Gastrocnemius medialis (tissue), 4 donors: ENCODE measurements at regions of chr20 and their contacts with region 1.

Region 1: DNA sequence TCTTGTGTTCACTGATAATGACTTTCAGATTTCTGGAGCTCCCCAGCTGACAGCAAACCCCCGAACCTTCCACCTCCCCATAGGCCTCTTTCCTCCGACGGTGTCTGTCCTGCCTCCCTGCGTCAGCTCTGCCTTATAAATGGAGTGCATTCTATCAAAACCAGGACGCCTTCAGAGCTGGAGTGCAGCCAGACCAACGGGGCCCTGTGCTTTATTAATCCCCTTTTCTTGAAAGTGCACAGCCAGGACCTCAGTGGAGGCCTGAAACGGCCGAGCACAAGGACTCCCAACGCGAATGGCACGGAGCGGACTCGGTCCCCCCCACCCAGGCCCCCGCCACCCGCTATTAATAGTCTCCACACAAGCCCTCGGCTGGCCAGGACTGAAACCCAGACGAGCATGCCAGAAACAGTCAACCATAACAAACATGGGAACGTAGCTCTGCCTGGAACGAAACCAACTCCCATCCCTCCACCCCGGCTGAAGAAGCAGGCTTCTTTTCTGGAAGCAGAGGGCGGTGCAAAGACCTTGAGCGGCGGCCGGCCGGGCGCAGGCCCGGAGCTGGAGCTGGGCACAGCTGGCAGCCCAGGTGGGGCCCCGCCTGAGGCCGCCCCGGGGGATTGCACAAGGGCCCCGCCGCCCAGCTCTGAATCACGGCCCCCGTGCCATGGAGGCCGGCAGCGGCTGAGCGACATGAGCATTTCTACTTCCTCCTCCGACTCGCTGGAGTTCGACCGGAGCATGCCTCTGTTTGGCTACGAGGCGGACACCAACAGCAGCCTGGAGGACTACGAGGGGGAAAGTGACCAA is 42.3 kb upstream of the NAA20 start:
- DNase-seq: peak; percentile 82 to 90
- ATAC-seq: peak; percentile 73 to 77
- H3K4me3 ChIP-seq: peak overlapping the region; percentile 54 to 65 (median 61)
- H3K27ac ChIP-seq: peak overlapping the region; percentile 86 to 95 (median 94)
- H3K4me1 ChIP-seq: peaks cover 62 to 63% of the 10 kb centered on the region in 2 donors
- H3K27me3 ChIP-seq: no peaks in the 10 kb centered on the region
- CTCF ChIP-seq: peak in 1 of 5 experiments; percentile 8
- POLR2A ChIP-seq: peak; percentile 19 to 62

Region 2: DNA sequence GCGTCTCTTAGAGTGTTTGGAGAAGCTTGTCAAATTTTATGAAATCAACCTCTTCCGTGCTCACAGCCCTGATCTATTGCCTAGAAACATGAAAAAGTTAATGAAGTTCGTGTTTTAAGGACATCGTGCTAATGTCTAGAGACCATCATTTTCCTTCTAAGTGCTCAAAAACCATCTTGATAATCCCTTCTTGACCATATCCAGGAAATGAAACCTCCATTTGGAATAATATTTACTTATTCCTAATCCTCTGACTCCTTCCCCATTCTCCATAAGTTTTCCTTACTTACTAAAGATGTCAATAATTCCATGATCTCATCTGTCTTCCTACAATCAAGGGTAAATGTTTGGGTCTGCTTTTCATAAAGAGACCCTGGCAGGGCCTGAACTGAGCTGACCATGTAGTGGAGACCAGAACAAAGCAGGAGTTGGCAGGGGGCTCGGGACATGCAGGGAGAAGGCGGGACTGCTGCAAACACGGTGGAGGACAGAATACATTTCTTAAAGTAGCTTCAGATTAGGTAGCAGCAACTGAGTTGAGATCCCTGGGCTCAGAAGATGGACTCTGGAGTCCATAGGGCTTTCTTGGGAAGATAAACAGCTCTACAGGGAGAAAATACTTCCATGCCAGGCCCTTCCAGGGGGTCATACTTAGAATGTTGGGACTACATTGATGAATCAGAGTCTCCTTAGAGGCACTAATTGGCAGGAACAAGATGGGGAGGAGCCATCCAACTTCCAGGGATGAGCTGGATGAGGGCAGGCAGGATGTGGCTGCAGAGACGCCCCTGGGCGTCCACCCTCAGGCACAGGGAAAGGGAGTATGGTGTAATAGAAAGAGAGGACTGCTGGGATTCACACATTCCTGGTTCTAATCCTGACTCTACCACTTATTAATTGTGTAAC is 116.1 kb before region 1 on chr20:
- in situ Hi-C with region 1: no loop called
- intact Hi-C with region 1: no loop called
- DNase-seq: peak in 1 of 2 donors; percentile 18
- ATAC-seq: no peak
- H3K4me3 ChIP-seq: no peak overlapping the region
- H3K27ac ChIP-seq: no peak overlapping the region
- H3K4me1 ChIP-seq: no peaks in the 10 kb centered on the region
- H3K27me3 ChIP-seq: no peaks in the 10 kb centered on the region
- CTCF ChIP-seq: no peak
- POLR2A ChIP-seq: no peak

Region 3: DNA sequence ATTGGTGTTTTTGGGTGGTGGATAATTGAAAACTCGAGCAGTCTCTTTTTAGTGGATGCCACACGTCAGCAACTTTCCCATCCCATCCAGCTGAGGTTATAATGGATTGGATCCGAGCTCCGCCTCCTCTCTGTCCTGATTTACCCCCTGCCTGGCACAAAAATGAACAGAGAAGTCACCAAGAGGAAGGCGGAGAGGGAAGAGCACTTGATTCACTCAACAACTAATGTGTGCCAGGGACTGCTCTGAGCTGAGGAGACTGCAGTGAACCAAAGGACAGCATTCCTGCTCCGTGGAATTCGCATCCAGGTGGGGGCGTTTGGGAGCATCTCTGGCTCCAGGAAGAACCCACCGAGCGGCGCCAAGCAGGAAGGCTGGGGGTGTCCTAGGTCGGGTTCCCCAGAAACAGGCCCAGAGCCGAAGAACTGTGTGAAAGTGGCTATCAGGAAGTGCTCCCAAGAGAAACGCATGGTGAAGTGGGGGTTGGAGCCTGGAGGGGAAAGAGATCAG is 53.5 kb before region 1 on chr20:
- in situ Hi-C with region 1: no loop called
- intact Hi-C with region 1: loop called (anchors 2 kb)
- DNase-seq: peak; percentile 49 to 81
- ATAC-seq: peak; percentile 89 to 90
- H3K4me3 ChIP-seq: peak overlapping the region; percentile 18 to 42 (median 32)
- H3K27ac ChIP-seq: peak overlapping the region; percentile 73 to 87 (median 82)
- H3K4me1 ChIP-seq: peaks cover 56 to 67% of the 10 kb centered on the region in 2 donors
- H3K27me3 ChIP-seq: no peaks in the 10 kb centered on the region
- CTCF ChIP-seq: no peak
- POLR2A ChIP-seq: no peak

Region 4: GRCh38 chr20:19934792-19935491 is 39.9 kb before region 1 on chr20:
- in situ Hi-C with region 1: no loop called
- intact Hi-C with region 1: loop called (anchors 5 kb)
- DNase-seq: peak; percentile 61 to 70
- ATAC-seq: peak; percentile 74 to 82
- H3K4me3 ChIP-seq: peak overlapping the region; percentile 24 to 45 (median 34)
- H3K27ac ChIP-seq: peak overlapping the region; percentile 77 to 83 (median 77)
- H3K4me1 ChIP-seq: peaks cover 27 to 58% of the 10 kb centered on the region in 2 donors
- H3K27me3 ChIP-seq: no peaks in the 10 kb centered on the region
- CTCF ChIP-seq: no peak
- POLR2A ChIP-seq: peak; percentile 27 to 53

Region 5: DNA sequence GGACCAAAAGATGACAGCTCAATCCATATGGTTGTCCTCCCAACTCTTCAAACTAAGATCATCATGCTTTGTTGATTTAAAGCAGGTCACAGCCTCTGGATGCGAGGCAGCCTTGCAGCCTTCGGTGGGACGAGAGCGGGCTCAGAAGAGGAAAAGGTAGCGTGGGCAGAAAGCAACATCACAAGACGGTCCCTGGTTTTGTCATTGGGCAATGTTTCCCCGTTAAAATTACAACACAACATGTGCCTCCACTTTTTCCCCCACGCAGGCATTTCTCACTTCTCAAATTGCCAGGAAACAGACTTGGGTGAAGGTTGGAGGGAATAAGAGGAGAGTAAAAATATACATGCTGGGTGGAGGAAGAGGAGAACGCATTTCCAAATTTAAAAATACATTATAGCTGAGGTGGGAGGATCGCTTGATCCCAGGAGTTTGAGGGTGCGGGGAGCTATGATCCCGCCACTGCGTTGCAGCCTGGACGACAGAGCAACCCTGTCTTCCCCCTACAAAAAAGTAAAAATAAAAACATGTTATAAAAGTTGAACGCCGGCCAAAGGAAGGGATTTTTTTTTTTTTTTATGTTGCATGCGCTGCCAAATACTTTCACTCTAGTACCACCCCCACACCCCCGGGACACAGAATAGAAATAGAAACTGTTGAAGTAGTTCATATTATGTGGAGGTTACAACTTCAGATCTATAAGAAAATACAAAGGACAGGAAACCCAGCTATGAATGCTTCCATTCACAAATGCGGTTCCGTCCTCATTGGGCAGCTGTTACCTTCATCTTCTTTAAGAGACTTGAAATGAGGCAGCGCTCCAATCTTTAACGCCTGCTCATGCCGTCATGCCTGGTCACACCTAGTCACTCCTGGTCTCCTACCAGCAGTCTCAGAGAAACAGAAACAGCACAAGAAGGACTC is 28.5 kb after region 1 on chr20:
- in situ Hi-C with region 1: no loop called
- intact Hi-C with region 1: loop called (anchors 2 kb)
- DNase-seq: peak; percentile 69 to 80
- ATAC-seq: peak; percentile 86 to 88
- H3K4me3 ChIP-seq: peak overlapping the region; percentile 25 to 50 (median 34)
- H3K27ac ChIP-seq: peak overlapping the region; percentile 74 to 86 (median 84)
- H3K4me1 ChIP-seq: peaks cover 31 to 42% of the 10 kb centered on the region in 2 donors
- H3K27me3 ChIP-seq: no peaks in the 10 kb centered on the region
- CTCF ChIP-seq: no peak
- POLR2A ChIP-seq: peak in 1 of 2 donors; percentile 57

Region 6: GRCh38 chr20:20037960-20038359 is 63.1 kb after region 1 on chr20:
- in situ Hi-C with region 1: no loop called
- intact Hi-C with region 1: no loop called
- DNase-seq: no peak
- ATAC-seq: no peak
- H3K4me3 ChIP-seq: no peak overlapping the region
- H3K27ac ChIP-seq: no peak overlapping the region
- H3K4me1 ChIP-seq: no peaks in the 10 kb centered on the region
- H3K27me3 ChIP-seq: no peaks in the 10 kb centered on the region
- CTCF ChIP-seq: no peak
- POLR2A ChIP-seq: no peak